T-cell (primary cell): ENCODE measurements at regions of chr17 and their contacts with region 1.

Region 1: DNA sequence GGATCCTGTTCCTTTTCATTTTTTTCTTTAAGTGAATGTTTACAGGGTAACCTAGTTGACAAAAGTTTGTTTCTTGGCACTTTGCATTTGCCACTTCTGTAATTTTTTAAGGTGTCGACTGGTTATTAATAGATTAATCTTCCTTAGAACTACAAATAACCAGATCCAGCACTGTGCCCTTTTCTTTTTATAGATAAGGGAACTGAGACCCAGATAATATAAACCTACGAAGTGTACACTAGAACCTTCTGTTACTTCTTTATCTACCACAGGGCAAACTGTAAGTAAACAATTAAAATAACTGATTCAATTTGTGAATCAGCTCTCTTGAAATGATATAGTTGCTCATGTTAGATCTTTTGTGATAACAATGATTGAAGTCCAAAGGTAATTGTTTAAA is 55.4 kb downstream of the NLK start:
- DNase-seq: no peak
- ATAC-seq: no peak
- H3K4me3 ChIP-seq: no peak overlapping the region
- H3K4me3 Mint-ChIP-seq: no peak overlapping the region
- H3K27ac ChIP-seq: no peak overlapping the region
- H3K27ac Mint-ChIP-seq: no peak overlapping the region
- H3K4me1 ChIP-seq: no peaks in the 10 kb centered on the region
- H3K4me1 Mint-ChIP-seq: peaks cover 0 to 6% (median 6%) of the 10 kb centered on the region in 3 donors
- H3K27me3 ChIP-seq: no peaks in the 10 kb centered on the region
- H3K27me3 Mint-ChIP-seq: no peaks in the 10 kb centered on the region

Region 2: GRCh38 chr17:28112220-28113005 is 14.5 kb after region 1 on chr17:
- CTCF ChIA-PET with region 1: no interaction called
- POLR2A ChIA-PET with region 1: interaction called in 1 of 2 experiments, 16 read pairs
- DNase-seq: no peak
- ATAC-seq: no peak
- H3K4me3 ChIP-seq: no peak overlapping the region
- H3K4me3 Mint-ChIP-seq: no peak overlapping the region
- H3K27ac ChIP-seq: no peak overlapping the region
- H3K27ac Mint-ChIP-seq: no peak overlapping the region
- H3K4me1 ChIP-seq: peaks cover 0 to 6% of the 10 kb centered on the region in 2 experiments
- H3K4me1 Mint-ChIP-seq: peaks cover 18 to 25% (median 22%) of the 10 kb centered on the region in 3 donors
- H3K27me3 ChIP-seq: no peaks in the 10 kb centered on the region
- H3K27me3 Mint-ChIP-seq: no peaks in the 10 kb centered on the region